MCF 10A (cell line): ENCODE measurements at regions of chr15 and their contacts with region 1.

Region 1: GRCh38 chr15:45611305-45611704 is 23.5 kb upstream of the SQOR start:
- DNase-seq: peak; percentile 37
- H3K4me3 Mint-ChIP-seq: no peak overlapping the region
- H3K27ac Mint-ChIP-seq: no peak overlapping the region
- H3K4me1 Mint-ChIP-seq: peaks cover 6% of the 10 kb centered on the region
- H3K27me3 Mint-ChIP-seq: no peaks in the 10 kb centered on the region
- CTCF ChIP-seq: peak; percentile 43

Region 2: DNA sequence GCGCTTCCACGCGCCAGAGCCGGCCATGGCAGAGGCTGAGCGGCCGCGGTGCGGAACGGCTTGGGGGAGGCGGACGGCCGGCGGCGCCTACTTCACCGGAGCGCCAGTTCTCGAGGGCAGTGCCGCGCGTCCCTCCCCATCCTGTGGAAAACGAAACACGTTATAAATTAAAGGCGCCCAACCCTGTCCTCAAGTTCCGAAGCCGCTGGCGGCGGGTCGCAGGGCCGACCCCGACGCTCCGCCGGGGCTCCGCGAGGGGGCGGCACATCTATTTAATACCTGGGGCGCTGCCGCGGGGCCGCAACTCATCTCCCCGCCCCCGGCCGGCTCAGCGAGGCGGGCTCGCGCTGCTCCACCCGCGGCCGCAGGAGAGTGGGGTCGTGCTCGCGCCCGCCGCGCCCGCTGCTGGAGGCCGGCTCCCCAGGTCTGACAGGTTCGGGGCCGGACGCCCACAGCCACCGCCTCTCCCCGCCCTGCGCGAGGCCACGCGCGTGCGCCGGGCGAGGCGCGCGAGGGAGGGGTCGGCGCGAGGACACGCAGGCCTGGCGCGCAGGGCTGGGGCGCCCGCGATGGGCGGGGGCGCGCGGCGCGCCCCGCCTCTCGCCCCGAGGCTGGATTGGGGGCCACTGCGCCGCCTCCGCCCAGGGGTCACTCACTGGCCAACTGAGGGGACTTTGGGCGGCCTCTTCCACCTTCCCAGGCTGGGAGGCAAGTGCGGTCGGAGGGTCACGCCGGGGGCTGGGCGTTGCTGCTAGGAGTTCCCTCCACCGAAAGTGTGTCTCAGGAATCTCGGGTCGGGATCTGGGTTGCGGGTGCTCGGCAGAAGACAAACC is 88.8 kb before region 1 on chr15 and contains the start of gene SLC30A4:
- CTCF ChIA-PET with region 1: interaction called, 5 read pairs
- POLR2A ChIA-PET with region 1: interaction called, 3 read pairs
- intact Hi-C with region 1: loop called (anchors 1 kb)
- DNase-seq: peak; percentile 37
- H3K4me3 Mint-ChIP-seq: peak within 1 kb of the TSS; percentile 89
- H3K27ac Mint-ChIP-seq: peak within 1 kb of the TSS; percentile 19
- H3K4me1 Mint-ChIP-seq: peaks cover 15% of the 10 kb centered on the region
- H3K27me3 Mint-ChIP-seq: no peaks in the 10 kb centered on the region
- CTCF ChIP-seq: peak; percentile 26
- total RNA-seq, gene SLC30A4: 3.4 and 3.8 TPM in 2 replicates

Region 3: DNA sequence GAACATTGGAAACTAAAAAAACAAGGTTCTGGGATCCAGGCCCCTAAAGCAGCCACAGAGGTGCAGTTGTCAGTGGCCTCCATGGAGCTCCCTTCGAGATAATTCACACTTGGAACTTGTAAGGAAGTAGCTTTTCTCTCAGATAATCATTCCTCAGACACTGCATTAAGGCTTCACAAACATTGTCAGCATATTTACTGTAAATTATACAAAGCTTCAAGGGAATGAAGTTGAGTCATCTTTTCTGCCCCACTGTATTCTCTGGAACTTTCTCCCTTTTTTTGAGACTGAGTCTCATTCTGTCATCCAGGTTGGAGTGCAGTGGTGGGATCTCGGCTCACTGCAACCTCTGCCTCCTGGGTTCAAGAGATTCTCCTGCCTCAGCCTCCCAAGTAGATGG is 17.0 kb before region 1 on chr15:
- CTCF ChIA-PET with region 1: interaction called, 11 read pairs
- POLR2A ChIA-PET with region 1: interaction called, 3 read pairs
- intact Hi-C with region 1: no loop called
- DNase-seq: no peak
- H3K4me3 Mint-ChIP-seq: no peak overlapping the region
- H3K27ac Mint-ChIP-seq: no peak overlapping the region
- H3K4me1 Mint-ChIP-seq: peaks cover 4% of the 10 kb centered on the region
- H3K27me3 Mint-ChIP-seq: no peaks in the 10 kb centered on the region
- CTCF ChIP-seq: no peak

Region 4: DNA sequence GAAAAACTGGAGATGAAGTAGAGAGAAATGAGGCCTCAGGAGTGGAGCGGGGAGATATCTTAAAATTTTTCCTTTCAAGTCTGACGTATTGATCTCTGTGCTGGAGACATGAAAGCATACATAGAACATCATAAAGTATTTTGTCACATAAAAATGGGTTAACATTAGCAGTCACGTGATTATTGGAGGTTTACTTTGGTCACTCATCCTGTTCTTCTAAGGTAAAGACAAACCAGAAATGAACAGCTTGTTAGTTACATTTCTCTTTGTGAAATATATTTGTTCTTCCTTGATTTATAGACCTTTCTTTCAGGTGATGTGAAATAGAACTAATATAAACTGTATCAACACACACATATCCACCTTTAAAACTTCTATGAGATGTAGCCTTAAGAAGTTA is 347.6 kb after region 1 on chr15:
- CTCF ChIA-PET with region 1: no interaction called
- POLR2A ChIA-PET with region 1: no interaction called
- intact Hi-C with region 1: no loop called
- DNase-seq: no peak
- H3K4me3 Mint-ChIP-seq: no peak overlapping the region
- H3K27ac Mint-ChIP-seq: no peak overlapping the region
- H3K4me1 Mint-ChIP-seq: no peaks in the 10 kb centered on the region
- H3K27me3 Mint-ChIP-seq: no peaks in the 10 kb centered on the region
- CTCF ChIP-seq: no peak